Activated B cell treated with CpG ODN at 0.5 μM for 24 hours (primary cell): ENCODE measurements at regions of chr6 and their contacts with region 1.

Region 1: DNA sequence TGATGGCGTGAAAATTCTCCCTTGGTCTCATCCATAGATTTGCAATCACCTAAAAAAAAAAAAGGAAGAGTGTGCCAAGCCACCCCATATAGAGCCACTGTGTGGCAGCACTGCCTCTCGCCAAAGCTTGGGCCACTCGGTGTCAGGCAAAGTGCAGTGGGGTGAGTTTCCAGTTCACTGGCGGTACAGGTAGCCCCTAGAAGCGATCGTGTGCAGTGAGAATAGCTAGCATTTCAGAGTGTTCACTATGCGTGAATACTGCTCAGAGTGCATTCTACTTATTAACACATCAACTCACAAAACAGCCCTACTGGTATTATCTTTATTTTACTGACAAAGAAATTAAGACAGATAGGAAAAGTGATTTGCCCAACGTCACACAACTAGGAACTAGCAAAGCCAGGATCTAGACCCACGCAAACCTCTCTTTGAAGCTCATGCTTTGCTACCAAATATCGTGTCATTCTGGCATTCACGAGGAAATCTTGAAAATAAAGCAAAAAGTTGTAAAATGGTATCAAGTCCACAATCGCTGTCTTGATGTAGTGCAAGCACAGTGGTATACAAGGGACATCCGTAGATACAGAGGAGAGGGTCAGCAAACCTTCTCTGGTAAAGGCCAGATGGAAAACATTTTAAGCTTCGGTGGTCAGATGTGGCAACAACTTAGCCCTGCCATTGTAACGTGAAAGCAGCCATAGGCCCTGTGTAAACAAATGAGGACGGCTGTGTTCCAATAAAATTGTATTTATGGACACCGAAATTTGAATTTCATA is 10.4 kb upstream of the GCNT2 start:
- DNase-seq: no peak
- ATAC-seq: peak; percentile 99
- H3K4me3 Mint-ChIP-seq: peak overlapping the region; percentile 58
- H3K27ac Mint-ChIP-seq: no peak overlapping the region
- H3K4me1 Mint-ChIP-seq: peaks cover 6% of the 10 kb centered on the region
- H3K27me3 Mint-ChIP-seq: no peaks in the 10 kb centered on the region
- CTCF ChIP-seq: no peak

Region 2: DNA sequence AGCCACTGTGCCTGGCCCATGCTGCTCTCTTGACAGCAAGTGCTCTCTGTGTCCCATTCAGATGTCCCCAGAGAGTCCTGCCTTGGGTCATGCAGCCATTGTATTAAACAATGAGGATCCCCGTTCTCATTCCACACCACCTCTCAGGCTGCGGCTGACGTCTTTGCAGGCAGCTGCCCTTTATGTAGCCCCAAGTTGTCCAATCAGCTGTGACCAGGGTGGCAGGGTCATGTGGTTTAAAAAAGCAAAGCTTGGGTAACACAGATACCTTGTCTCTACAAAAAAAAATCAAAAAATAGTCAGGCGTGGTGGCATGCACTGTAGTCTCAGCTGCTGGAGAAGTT is 23.6 kb after region 1 on chr6:
- CTCF ChIA-PET with region 1: interaction called, 21 read pairs
- POLR2A ChIA-PET with region 1: interaction called, 10 read pairs
- intact Hi-C with region 1: no loop called
- DNase-seq: peak; percentile 45
- ATAC-seq: peak; percentile 58
- H3K4me3 Mint-ChIP-seq: peak overlapping the region; percentile 88
- H3K27ac Mint-ChIP-seq: peak overlapping the region; percentile 99
- H3K4me1 Mint-ChIP-seq: peaks cover 92% of the 10 kb centered on the region
- H3K27me3 Mint-ChIP-seq: no peaks in the 10 kb centered on the region
- CTCF ChIP-seq: no peak

Region 3: GRCh38 chr6:10582774-10583508 is 72.2 kb after region 1 on chr6:
- CTCF ChIA-PET with region 1: interaction called, 3 read pairs
- POLR2A ChIA-PET with region 1: no interaction called
- intact Hi-C with region 1: loop called (anchors 5 kb)
- DNase-seq: no peak
- ATAC-seq: no peak
- H3K4me3 Mint-ChIP-seq: no peak overlapping the region
- H3K27ac Mint-ChIP-seq: no peak overlapping the region
- H3K4me1 Mint-ChIP-seq: peaks cover 10% of the 10 kb centered on the region
- H3K27me3 Mint-ChIP-seq: no peaks in the 10 kb centered on the region
- CTCF ChIP-seq: no peak

Region 4: GRCh38 chr6:10694302-10695085 is 183.7 kb after region 1 on chr6 and contains the starts of genes C6orf52 and PAK1IP1:
- CTCF ChIA-PET with region 1: interaction called, 11 read pairs
- POLR2A ChIA-PET with region 1: interaction called, 10 read pairs
- intact Hi-C with region 1: loop called (anchors 1 kb)
- DNase-seq: peak; percentile 84
- ATAC-seq: peak; percentile 94
- H3K4me3 Mint-ChIP-seq: peak within 1 kb of the TSS; percentile 99
- H3K27ac Mint-ChIP-seq: peak within 1 kb of the TSS; percentile 100
- H3K4me1 Mint-ChIP-seq: peaks cover 29% of the 10 kb centered on the region
- H3K27me3 Mint-ChIP-seq: no peaks in the 10 kb centered on the region
- CTCF ChIP-seq: no peak
- total RNA-seq, gene C6orf52: 1.0 and 1.6 TPM in 2 replicates
- total RNA-seq, gene PAK1IP1: 18.1 and 18.3 TPM in 2 replicates

Region 5: GRCh38 chr6:10747251-10747972 is 236.6 kb after region 1 on chr6 and contains the start of gene TMEM14B:
- CTCF ChIA-PET with region 1: interaction called, 3 read pairs
- POLR2A ChIA-PET with region 1: no interaction called
- intact Hi-C with region 1: loop called (anchors 1 kb)
- DNase-seq: peak; percentile 100
- ATAC-seq: peak; percentile 98
- H3K4me3 Mint-ChIP-seq: peak within 1 kb of the TSS; percentile 95
- H3K27ac Mint-ChIP-seq: peak within 1 kb of the TSS; percentile 93
- H3K4me1 Mint-ChIP-seq: peaks cover 34% of the 10 kb centered on the region
- H3K27me3 Mint-ChIP-seq: no peaks in the 10 kb centered on the region
- CTCF ChIP-seq: no peak
- total RNA-seq, gene TMEM14B: 60.3 and 63.4 TPM in 2 replicates

Region 6: GRCh38 chr6:10800829-10801535 is 290.2 kb after region 1 on chr6:
- CTCF ChIA-PET with region 1: interaction called, 53 read pairs
- POLR2A ChIA-PET with region 1: no interaction called
- intact Hi-C with region 1: loop called (anchors 1 kb)
- DNase-seq: peak; percentile 37
- ATAC-seq: peak; percentile 75
- H3K4me3 Mint-ChIP-seq: no peak overlapping the region
- H3K27ac Mint-ChIP-seq: no peak overlapping the region
- H3K4me1 Mint-ChIP-seq: no peaks in the 10 kb centered on the region
- H3K27me3 Mint-ChIP-seq: no peaks in the 10 kb centered on the region
- CTCF ChIP-seq: peak; percentile 98

Region 7: GRCh38 chr6:12097791-12098190 is 1587.0 kb after region 1 on chr6:
- CTCF ChIA-PET with region 1: no interaction called
- POLR2A ChIA-PET with region 1: no interaction called
- intact Hi-C with region 1: no loop called
- DNase-seq: no peak
- ATAC-seq: no peak
- H3K4me3 Mint-ChIP-seq: no peak overlapping the region
- H3K27ac Mint-ChIP-seq: no peak overlapping the region
- H3K4me1 Mint-ChIP-seq: peaks cover 20% of the 10 kb centered on the region
- H3K27me3 Mint-ChIP-seq: no peaks in the 10 kb centered on the region
- CTCF ChIP-seq: no peak